K562 (cell line): ENCODE measurements at regions of chr9 and their contacts with region 1.

Region 1: DNA sequence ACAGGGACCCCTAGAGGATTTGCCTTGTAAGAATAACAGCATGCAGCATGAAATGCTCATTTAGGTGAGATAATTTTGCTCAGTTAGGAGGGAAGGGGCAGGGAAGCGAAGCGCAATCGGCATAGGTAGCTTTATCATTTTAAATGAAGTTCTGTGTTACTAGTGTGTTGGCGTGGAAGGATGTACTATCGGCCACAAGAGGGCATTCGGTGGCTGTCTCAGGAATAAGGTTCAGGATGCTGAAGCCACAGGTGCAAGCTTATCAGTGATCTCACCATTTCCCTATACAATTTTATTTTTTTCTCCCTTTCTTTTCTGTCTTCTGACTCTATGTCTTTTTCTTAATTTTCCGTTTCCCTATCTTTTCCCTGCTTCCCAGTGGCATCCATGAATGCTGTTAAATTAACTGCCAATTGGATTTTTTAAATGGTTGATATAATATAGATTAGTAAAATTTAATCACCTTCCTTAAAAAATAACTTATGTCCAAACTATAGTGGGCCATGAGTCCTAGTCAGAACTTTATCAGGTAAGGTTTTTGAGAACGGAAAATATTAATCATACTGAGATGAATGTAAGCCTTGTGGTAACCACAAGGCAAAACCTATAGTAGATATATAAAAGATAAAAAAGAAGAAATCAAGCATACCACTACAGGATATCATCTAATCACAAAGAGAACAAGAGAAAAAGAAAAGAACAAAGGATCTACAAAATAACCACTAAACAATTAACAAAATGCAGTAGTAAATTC is 1.2 kb upstream of the INSL6 start:
- DNase-seq: peak; percentile 35 to 47 (median 41)
- ATAC-seq: peak; percentile 83
- H3K4me3 ChIP-seq: no peak overlapping the region
- H3K27ac ChIP-seq: no peak overlapping the region
- H3K4me1 ChIP-seq: peaks cover 0 to 5% of the 10 kb centered on the region in 2 experiments; a peak in 2 of 5 replicates
- H3K27me3 ChIP-seq: no peaks in the 10 kb centered on the region
- CTCF ChIP-seq: peak; percentile 54 to 65 (median 65)
- EP300 ChIP-seq: no peak
- POLR2A ChIP-seq: no peak
- RAD21 ChIP-seq: peak; percentile 60 to 70

Region 2: DNA sequence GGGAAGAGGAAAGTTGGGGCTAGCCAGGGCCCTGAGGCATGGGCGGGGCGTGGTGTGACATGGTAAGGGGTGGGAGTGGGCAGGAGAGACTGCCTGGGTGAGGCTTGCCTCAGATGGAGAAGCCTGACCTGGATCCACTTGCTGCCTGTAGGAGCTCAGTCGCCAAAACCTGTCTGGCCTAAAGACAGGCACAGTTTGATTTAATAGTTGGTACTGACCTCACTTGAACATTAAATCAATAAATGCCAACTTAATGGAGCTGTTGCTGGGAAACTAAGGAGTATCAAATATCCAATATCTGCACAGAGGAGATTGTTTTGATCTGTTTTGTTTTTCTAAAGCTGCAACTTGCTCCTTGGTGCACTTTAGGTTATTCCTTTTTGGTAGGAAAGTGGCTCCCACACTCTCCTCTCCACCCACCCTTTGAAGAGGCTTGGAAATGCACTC is 307.5 kb before region 1 on chr9:
- CTCF ChIA-PET with region 1: no interaction called
- POLR2A ChIA-PET with region 1: no interaction called
- in situ Hi-C with region 1: no loop called
- intact Hi-C with region 1: no loop called
- DNase-seq: no peak
- ATAC-seq: no peak
- H3K4me3 ChIP-seq: no peak overlapping the region
- H3K27ac ChIP-seq: no peak overlapping the region
- H3K4me1 ChIP-seq: peaks cover 0 to 3% of the 10 kb centered on the region in 2 experiments; a peak in 3 of 5 replicates
- H3K27me3 ChIP-seq: no peaks in the 10 kb centered on the region
- CTCF ChIP-seq: no peak
- EP300 ChIP-seq: no peak
- POLR2A ChIP-seq: no peak
- RAD21 ChIP-seq: no peak

Region 3: DNA sequence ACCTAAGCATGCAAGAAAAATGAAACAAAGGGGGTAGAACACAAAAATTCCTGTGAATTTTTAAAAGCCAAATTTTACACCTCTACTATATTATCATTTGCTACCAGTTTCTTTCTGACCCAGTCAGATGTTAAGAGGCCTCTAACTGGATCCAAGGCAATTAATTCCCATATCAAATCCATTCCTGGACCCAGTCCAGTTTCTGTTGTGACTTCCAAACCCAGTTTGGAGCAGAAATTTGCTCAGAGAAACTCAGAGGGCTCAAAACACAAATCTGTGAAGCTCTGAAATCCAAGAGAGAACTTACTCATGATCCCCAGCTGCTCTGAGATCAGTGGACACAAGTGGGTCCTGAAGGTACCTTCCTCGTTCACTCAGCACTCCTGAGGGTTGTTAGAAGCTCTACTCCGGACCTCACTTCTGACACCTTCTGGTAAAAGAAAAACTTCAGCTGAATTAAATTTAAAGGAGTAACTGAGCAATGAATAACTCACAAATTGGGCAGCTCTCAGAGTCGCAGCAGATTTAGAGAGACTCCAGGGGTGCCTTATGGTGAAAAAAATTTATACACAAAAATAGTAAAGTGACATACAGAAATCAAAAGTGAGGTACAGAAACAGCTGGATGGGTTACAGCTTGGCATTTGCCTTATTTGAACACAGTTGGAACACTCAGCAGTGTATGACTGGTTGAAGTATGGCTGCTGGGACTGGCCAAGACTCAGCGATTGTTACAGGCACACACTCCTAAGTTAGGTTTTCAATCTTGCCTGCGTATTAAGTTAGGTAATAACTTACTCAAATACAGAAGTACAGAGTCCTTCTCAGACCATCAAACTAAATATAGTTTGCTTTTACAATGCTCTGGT is 77.0 kb after region 1 on chr9:
- CTCF ChIA-PET with region 1: no interaction called
- POLR2A ChIA-PET with region 1: no interaction called
- in situ Hi-C with region 1: no loop called
- intact Hi-C with region 1: loop called (anchors 1 kb)
- DNase-seq: peak in 2 of 4 experiments; percentile 5 to 14
- ATAC-seq: peak; percentile 64; the same call in 2 of the 3 replicates
- H3K4me3 ChIP-seq: no peak overlapping the region
- H3K27ac ChIP-seq: no peak overlapping the region
- H3K4me1 ChIP-seq: no peaks in the 10 kb centered on the region
- H3K27me3 ChIP-seq: no peaks in the 10 kb centered on the region; a peak in 1 of 5 replicates
- CTCF ChIP-seq: peak; percentile 10 to 29 (median 11); a peak in 2 of 6 replicates
- EP300 ChIP-seq: no peak
- POLR2A ChIP-seq: no peak
- RAD21 ChIP-seq: peak in 1 of 2 experiments; percentile 32; a peak in 1 of 4 replicates

Region 4: DNA sequence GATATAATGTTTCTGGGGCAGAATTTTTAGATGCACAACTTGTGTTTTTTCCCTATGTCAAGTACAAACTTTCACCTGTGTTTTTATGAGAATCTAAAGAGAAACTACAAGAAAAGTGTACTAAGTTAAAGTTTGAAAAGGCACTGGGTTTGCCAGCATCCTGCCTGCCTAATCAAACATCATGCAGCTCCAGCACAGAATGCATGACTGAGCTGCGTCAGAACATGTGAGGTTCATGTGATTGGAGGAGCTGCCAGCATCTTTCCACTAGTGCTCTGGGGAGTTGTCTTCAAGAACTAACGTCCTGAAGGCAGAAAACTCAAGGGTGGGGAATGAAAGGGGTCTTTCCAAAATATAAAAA is 396.2 kb after region 1 on chr9:
- CTCF ChIA-PET with region 1: no interaction called
- POLR2A ChIA-PET with region 1: no interaction called
- in situ Hi-C with region 1: loop called (anchors 25 kb)
- intact Hi-C with region 1: no loop called
- DNase-seq: no peak
- ATAC-seq: no peak
- H3K4me3 ChIP-seq: no peak overlapping the region
- H3K27ac ChIP-seq: no peak overlapping the region
- H3K4me1 ChIP-seq: no peaks in the 10 kb centered on the region; a peak in 1 of 5 replicates
- H3K27me3 ChIP-seq: no peaks in the 10 kb centered on the region
- CTCF ChIP-seq: no peak
- EP300 ChIP-seq: no peak
- POLR2A ChIP-seq: no peak
- RAD21 ChIP-seq: no peak

Region 5: GRCh38 chr9:5851445-5851844 is 664.9 kb after region 1 on chr9:
- CTCF ChIA-PET with region 1: no interaction called
- POLR2A ChIA-PET with region 1: no interaction called
- in situ Hi-C with region 1: no loop called
- intact Hi-C with region 1: no loop called
- DNase-seq: peak in 2 of 4 experiments; percentile 45 to 66
- ATAC-seq: peak; percentile 73
- H3K4me3 ChIP-seq: no peak overlapping the region
- H3K27ac ChIP-seq: no peak overlapping the region
- H3K4me1 ChIP-seq: peaks cover 3 to 25% of the 10 kb centered on the region in 2 experiments; a peak in 4 of 5 replicates
- H3K27me3 ChIP-seq: no peaks in the 10 kb centered on the region
- CTCF ChIP-seq: no peak
- EP300 ChIP-seq: peak; percentile 36; the same call in 1 of the 2 replicates
- POLR2A ChIP-seq: no peak
- RAD21 ChIP-seq: no peak